ENCODE measurements at regions of chr2 and their contacts with region 1.

Region 1: GRCh38 chr2:55223958-55224760 is 7.9 kb downstream of the CLHC1 start:
- DNase-seq: no peak
- H3K4me3 Mint-ChIP-seq: peak overlapping the region; percentile 75
- H3K27ac Mint-ChIP-seq: peak overlapping the region; percentile 85
- H3K4me1 Mint-ChIP-seq: peaks cover 36% of the 10 kb centered on the region
- H3K27me3 Mint-ChIP-seq: no peaks in the 10 kb centered on the region

Region 2: DNA sequence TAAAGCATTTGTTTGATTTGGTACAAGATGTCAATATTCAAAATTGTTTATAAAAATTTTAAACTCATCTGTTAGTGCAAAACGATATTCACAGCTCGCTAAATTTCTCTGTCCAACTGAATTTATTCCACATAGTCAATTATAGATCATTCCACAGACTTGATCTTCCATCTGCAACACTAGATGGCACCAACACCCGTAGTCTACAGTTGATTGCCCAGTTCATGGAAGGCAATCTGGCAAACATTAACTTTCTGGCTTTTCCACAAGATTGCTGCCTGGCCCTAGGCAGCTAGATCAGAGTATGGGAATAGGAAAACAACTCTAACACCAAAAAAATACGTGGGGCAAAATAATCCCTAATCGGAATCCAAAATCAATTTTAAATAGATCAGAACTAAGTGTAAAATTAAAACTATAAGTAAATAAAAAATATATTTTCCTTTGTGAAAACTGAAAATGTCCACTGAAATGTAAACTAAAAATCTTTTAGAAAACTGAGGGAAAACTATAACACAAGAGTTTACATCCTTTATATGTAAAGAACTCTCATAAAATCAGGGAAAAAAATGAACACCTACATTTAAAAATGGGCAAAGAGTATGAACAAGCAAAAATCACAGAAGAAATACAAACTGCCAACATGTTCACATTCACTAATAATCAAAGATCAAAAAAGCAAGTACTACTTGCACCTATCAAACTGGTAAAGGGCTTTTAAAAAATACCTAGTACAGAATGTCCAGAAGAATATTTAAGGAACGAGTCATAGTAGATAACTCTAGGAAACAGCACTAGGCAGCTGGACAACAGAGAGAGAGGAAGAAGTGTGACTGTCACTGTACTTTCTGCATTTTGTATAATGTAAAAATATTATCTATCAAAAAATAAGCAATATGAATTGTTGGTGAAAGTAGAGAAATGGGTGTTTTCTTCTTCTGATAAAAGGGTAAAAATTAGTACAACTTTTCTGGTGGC is 208.9 kb before region 1 on chr2:
- intact Hi-C with region 1: loop called (anchors 1 kb)
- DNase-seq: peak; percentile 81
- H3K4me3 Mint-ChIP-seq: no peak overlapping the region
- H3K27ac Mint-ChIP-seq: no peak overlapping the region
- H3K4me1 Mint-ChIP-seq: peaks cover 19% of the 10 kb centered on the region
- H3K27me3 Mint-ChIP-seq: no peaks in the 10 kb centered on the region

Region 3: GRCh38 chr2:55431982-55432627 is 207.9 kb after region 1 on chr2:
- intact Hi-C with region 1: loop called (anchors 5 kb)
- DNase-seq: peak; percentile 60
- H3K4me3 Mint-ChIP-seq: no peak overlapping the region
- H3K27ac Mint-ChIP-seq: no peak overlapping the region
- H3K4me1 Mint-ChIP-seq: peaks cover 5% of the 10 kb centered on the region
- H3K27me3 Mint-ChIP-seq: peaks cover 5% of the 10 kb centered on the region